AG04449 (cell line): ENCODE measurements at regions of chr3 and their contacts with region 1.

Region 1: GRCh38 chr3:197511130-197511529 is 44.6 kb downstream of the BDH1 start:
- DNase-seq: no peak
- H3K4me3 ChIP-seq: no peak overlapping the region
- CTCF ChIP-seq: no peak

Region 2: GRCh38 chr3:197224034-197224444 is 287.1 kb before region 1 on chr3:
- CTCF ChIA-PET with region 1: interaction called, 55 read pairs
- POLR2A ChIA-PET with region 1: no interaction called
- DNase-seq: peak; percentile 17
- H3K4me3 ChIP-seq: no peak overlapping the region
- CTCF ChIP-seq: peak; percentile 34

Region 3: DNA sequence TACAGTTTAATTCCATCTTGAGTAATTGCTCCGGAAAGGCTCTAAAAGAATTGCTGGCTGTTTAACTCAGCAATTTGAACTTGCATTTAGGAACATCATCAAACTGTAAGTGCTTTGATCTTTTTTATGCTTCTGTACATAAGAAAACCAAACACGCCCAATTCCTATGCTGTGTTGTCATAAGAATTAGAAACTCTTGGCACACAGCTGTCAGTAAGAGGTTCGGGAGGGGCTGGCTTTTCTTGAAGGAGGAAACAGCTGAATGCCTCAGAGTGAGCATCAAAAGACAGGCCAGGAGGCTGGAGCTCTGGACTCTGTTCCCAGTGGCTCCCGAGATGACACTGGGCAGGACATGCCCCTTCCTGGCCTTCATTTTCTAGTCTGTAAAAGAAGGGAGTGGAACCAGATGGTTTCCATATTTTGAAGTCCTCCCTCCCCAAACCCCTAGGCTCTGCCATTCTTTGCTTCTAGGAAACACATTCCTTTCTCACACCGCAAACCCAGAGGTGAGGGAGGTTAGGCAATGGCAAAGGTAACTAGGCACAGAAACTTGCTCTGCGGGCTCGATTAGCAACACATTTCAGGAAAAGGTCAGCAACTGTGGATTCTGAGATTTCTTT is 139.0 kb before region 1 on chr3:
- CTCF ChIA-PET with region 1: interaction called, 10 read pairs
- POLR2A ChIA-PET with region 1: no interaction called
- DNase-seq: peak; percentile 79
- H3K4me3 ChIP-seq: no peak overlapping the region
- CTCF ChIP-seq: no peak

Region 4: GRCh38 chr3:197525706-197526105 is 14.6 kb after region 1 on chr3:
- CTCF ChIA-PET with region 1: interaction called, 17 read pairs
- POLR2A ChIA-PET with region 1: no interaction called
- DNase-seq: no peak
- H3K4me3 ChIP-seq: no peak overlapping the region
- CTCF ChIP-seq: peak; percentile 37

Region 5: DNA sequence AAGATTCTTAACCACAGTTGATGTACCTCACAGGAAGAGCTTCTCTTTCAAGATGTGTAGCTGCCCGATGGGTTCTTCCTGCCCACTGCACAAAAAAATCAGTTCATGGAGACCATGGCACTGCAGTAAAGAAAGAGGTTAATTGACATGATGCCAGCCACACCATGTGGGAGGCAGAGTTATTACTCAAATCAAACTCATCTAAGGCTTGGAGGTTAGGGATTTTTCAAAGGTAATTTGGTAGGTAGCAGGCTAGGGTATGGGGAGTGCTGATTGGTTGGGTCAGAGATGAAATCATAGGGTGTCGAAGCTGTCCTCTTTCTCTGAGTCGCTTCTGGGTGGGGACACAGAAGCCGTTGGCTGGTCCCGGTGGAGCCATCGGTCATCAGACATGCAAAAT is 102.1 kb after region 1 on chr3:
- CTCF ChIA-PET with region 1: no interaction called
- POLR2A ChIA-PET with region 1: no interaction called
- DNase-seq: no peak
- H3K4me3 ChIP-seq: no peak overlapping the region
- CTCF ChIP-seq: no peak

Region 6: DNA sequence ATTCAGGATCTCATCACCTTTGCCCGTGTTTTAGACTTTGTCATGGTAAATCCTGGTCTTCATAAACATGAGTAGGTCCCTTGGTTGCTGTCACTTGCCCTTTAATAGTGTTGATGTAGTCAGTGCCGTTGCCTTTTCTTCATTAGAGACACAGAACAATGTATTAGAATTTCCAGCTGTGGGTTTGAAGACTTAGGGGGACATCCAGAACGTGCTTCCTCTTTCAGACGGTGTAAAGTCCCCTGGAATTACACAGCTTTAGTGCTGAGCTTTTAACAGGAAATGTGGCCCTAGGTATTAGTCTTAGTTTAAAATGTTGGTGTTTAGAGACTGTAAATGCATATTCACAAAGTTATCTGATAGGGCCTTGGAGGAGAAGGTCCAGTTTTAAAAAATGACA is 271.1 kb after region 1 on chr3:
- CTCF ChIA-PET with region 1: no interaction called
- POLR2A ChIA-PET with region 1: no interaction called
- DNase-seq: no peak
- H3K4me3 ChIP-seq: no peak overlapping the region
- CTCF ChIP-seq: no peak